ENCODE measurements at regions of chr11 and their contacts with region 1.

Region 1: DNA sequence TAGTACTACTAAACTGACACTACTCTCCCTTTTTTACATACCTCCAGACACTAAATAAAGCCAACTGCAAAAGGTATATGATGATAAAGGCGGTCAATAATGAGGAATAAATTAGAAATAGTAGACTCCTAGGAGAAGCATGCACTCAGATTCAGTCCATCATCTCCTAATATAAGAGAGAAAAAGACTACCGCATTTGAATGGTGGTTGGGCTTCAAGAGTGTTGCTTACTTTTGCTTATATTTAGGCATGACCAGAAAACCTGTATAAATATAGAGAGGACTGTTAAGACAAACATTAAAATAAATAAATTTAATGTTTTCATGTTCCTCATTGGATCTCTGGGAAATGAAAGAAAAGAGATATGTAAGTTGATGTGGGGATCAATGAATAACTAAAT is 1137.0 kb downstream of the FAM181B start:
- DNase-seq: no peak
- H3K4me3 ChIP-seq: no peak overlapping the region
- H3K27ac ChIP-seq: no peak overlapping the region
- H3K4me1 ChIP-seq: peaks cover 0 to 6% (median 0%) of the 10 kb centered on the region in 4 donors
- H3K27me3 ChIP-seq: no peaks in the 10 kb centered on the region
- CTCF ChIP-seq: no peak
- EP300 ChIP-seq: no peak
- POLR2A ChIP-seq: no peak

Region 2: DNA sequence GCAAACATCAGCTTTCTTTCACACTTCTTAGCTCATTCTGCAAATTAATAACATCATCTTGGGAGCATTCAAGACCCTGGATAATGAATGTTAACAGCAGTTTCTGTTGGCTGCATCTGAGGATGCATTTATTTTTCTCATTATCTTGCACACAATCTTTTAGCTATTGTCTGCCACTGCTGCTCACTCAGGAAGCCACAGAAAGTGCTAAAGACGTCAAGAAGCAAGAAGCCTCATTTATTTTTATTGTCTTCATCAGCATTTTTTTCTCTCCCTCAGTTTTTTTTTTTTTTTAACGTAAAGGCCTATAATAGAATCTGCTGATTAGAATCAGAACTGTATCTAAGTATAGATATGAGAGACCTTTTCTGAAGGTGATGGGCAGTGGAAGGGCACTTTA is 202.4 kb before region 1 on chr11:
- in situ Hi-C with region 1: no loop called
- intact Hi-C with region 1: no loop called
- DNase-seq: no peak
- H3K4me3 ChIP-seq: no peak overlapping the region
- H3K27ac ChIP-seq: no peak overlapping the region
- H3K4me1 ChIP-seq: no peaks in the 10 kb centered on the region
- H3K27me3 ChIP-seq: no peaks in the 10 kb centered on the region
- CTCF ChIP-seq: no peak
- EP300 ChIP-seq: no peak
- POLR2A ChIP-seq: no peak

Region 3: GRCh38 chr11:81548123-81548522 is 48.6 kb before region 1 on chr11:
- in situ Hi-C with region 1: loop called in 1 of 4 experiments (anchors 10 kb)
- intact Hi-C with region 1: no loop called
- DNase-seq: no peak
- H3K4me3 ChIP-seq: no peak overlapping the region
- H3K27ac ChIP-seq: no peak overlapping the region
- H3K4me1 ChIP-seq: no peaks in the 10 kb centered on the region
- H3K27me3 ChIP-seq: no peaks in the 10 kb centered on the region
- CTCF ChIP-seq: no peak
- EP300 ChIP-seq: no peak
- POLR2A ChIP-seq: no peak

Region 4: DNA sequence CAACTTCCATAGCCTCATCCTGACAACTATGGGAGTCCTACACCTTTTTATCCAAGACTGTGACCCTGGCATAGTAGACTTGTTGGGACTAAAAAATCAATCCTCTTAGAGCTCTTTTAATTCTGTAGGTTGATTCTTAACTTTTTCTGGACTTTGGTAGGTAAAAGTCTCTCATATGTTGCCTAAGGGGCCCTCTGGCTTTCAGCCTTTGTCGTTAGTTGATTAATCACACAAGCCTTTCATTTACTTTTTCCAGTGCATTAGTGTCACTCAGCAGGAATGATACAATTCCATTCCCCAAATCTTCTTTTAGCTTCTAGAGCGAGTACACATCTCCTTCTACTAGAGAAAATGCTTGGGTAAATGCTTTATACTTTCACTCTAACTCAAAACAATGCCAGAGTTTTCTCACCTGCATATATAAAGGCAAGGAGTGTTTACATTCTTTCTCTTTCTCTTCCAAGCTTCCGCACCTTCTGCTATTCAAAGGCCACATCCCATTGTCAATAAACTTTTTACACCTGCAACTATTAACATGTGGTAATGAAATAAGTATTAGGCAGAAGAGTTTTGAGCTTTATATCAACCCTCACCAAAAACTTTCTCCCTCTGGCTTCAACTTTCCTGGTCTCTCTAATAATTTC is 620.3 kb after region 1 on chr11:
- in situ Hi-C with region 1: no loop called
- intact Hi-C with region 1: loop called (anchors 10 kb)
- DNase-seq: no peak
- H3K4me3 ChIP-seq: no peak overlapping the region
- H3K27ac ChIP-seq: no peak overlapping the region
- H3K4me1 ChIP-seq: no peaks in the 10 kb centered on the region
- H3K27me3 ChIP-seq: no peaks in the 10 kb centered on the region
- CTCF ChIP-seq: no peak
- EP300 ChIP-seq: no peak
- POLR2A ChIP-seq: no peak